Thyroid gland (tissue), 4 donors: ENCODE measurements at regions of chr6 and their contacts with region 1.

Region 1: DNA sequence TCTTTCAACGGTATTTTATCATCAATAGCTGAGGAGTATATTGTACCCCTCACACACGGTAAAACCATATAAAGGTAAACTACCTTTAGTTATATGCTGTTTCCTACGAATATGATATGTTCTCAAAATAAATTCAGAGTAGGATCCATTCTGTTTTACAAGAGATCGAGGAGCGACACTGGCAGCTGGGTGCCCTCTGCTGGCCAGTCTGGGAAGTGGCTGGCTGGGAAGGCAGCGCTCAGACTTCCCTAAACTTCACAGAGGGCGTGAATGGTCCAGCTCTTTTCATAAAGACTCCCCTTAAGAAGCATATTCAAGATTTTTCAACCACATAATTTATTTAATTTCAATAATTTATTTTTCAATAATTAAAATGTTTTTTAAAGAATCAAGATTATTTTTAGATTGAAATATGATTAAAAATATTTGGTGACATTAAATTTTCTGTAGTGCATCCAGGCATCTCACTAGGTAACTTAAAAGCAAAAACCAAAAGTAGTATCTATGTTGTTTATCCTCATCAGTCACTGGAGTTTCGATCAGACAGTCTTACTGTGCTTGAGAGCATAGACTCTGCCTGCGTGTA is 187.5 kb upstream of the PDE10A start:
- DNase-seq: peak; percentile 76 to 79
- H3K4me3 ChIP-seq: peak overlapping the region in 1 of 3 donors; percentile 35
- H3K27ac ChIP-seq: peak overlapping the region in 1 of 3 donors; percentile 32
- H3K4me1 ChIP-seq: peaks cover 0 to 6% of the 10 kb centered on the region in 2 donors
- H3K27me3 ChIP-seq: no peaks in the 10 kb centered on the region
- CTCF ChIP-seq: peak; percentile 88 to 99 (median 94)
- POLR2A ChIP-seq: no peak

Region 2: DNA sequence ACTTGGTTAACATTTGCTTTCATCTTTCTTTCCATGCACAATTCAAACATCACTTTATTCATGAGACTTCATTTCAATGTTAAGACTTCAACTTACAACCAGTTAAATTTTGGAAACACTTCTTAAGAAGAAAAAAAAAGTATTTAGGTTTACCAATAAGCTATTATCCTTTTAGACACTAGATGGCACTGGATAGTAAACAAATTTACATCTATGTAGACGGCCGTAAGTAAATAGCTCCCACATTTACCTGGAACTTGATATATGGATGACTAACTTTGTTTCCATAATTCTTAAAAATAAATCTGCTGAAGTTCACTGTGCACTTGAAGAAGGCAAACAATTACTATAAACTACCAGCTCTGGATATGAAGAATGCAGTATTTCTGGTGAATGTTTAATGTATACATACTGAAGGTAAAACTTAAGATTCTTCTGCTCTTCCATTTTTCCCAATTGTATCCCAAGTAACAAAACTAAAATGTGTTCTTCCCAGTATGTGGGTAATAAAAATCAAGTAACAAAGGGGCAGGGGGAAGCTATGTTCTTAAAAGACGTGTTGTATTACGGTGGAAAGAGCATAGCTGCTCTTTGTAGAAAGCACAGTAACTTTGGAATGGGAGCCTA is 410.5 kb before region 1 on chr6:
- intact Hi-C with region 1: loop called (anchors 5 kb)
- DNase-seq: no peak
- H3K4me3 ChIP-seq: no peak overlapping the region
- H3K27ac ChIP-seq: no peak overlapping the region
- H3K4me1 ChIP-seq: peaks cover 0 to 4% of the 10 kb centered on the region in 2 donors
- H3K27me3 ChIP-seq: no peaks in the 10 kb centered on the region
- CTCF ChIP-seq: peak; percentile 22 to 76 (median 46)
- POLR2A ChIP-seq: no peak

Region 3: DNA sequence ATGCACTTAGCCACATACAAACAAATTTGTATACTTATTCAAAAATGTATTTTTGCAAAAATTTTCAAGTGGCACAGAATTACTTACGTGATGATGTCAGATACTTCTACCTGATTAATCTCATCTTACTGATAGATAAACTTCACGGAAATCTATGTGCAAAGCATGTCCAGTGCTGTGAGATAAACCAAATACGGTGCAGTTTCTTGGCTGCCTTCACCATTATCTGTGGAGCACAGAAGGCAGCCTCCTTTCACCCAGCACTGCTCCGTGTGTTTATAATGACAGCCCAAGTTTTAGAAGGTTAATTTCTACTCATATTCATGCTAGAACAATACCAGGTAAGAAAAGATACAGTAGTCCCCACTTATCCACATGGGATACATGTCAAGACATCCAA is 128.5 kb before region 1 on chr6:
- intact Hi-C with region 1: no loop called
- DNase-seq: no peak
- H3K4me3 ChIP-seq: no peak overlapping the region
- H3K27ac ChIP-seq: no peak overlapping the region
- H3K4me1 ChIP-seq: no peaks in the 10 kb centered on the region
- H3K27me3 ChIP-seq: no peaks in the 10 kb centered on the region
- CTCF ChIP-seq: no peak
- POLR2A ChIP-seq: no peak

Region 4: DNA sequence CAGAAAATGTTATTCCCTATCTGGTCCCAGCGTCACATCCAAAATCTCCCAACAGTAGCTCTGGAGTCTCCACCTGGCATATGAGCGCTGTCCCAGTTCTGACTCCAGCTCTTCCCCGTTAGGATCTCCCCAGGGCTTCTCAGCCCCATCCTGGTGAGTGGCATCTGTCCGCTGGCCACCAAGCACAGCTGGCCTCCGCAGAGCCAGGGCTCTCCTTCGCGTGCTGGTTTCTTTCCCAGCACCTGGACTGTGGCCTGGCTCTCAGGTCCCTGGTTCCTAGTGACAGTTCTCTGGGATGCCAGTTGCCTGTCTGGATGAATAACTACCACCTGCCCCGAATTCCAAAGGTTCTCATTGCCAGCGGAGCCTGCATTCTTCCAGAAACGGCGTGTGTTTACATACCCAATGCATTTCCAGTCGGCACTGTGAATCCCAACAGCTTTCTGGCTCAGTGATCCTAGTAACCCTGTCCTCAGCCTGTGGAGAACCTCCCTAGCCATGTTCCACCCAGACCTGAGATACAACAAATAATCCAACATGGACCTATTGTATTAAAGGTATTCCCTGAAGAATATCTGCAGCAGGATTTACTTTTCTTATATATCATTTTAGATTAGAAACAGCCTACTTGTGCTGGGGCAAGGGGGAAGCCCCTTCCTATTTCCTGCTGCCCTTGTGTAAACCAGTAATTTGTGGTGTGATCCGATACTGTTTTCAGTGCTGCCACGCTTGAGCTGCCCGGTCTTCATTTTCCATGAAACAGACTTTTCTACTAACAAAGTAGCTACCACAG is 117.6 kb before region 1 on chr6:
- intact Hi-C with region 1: loop called (anchors 5 kb)
- DNase-seq: no peak
- H3K4me3 ChIP-seq: no peak overlapping the region
- H3K27ac ChIP-seq: no peak overlapping the region
- H3K4me1 ChIP-seq: peaks cover 0 to 3% of the 10 kb centered on the region in 2 donors
- H3K27me3 ChIP-seq: no peaks in the 10 kb centered on the region
- CTCF ChIP-seq: no peak
- POLR2A ChIP-seq: no peak

Region 5: GRCh38 chr6:165744555-165745228 is 105.8 kb before region 1 on chr6:
- intact Hi-C with region 1: no loop called
- DNase-seq: no peak
- H3K4me3 ChIP-seq: no peak overlapping the region
- H3K27ac ChIP-seq: no peak overlapping the region
- H3K4me1 ChIP-seq: peaks cover 5 to 7% of the 10 kb centered on the region in 2 donors
- H3K27me3 ChIP-seq: no peaks in the 10 kb centered on the region
- CTCF ChIP-seq: no peak
- POLR2A ChIP-seq: no peak

Region 6: GRCh38 chr6:165774903-165775601 is 75.5 kb before region 1 on chr6:
- intact Hi-C with region 1: no loop called
- DNase-seq: peak; percentile 12 to 16
- H3K4me3 ChIP-seq: no peak overlapping the region
- H3K27ac ChIP-seq: no peak overlapping the region
- H3K4me1 ChIP-seq: peaks cover 0 to 4% of the 10 kb centered on the region in 2 donors
- H3K27me3 ChIP-seq: no peaks in the 10 kb centered on the region
- CTCF ChIP-seq: no peak
- POLR2A ChIP-seq: no peak

Region 7: DNA sequence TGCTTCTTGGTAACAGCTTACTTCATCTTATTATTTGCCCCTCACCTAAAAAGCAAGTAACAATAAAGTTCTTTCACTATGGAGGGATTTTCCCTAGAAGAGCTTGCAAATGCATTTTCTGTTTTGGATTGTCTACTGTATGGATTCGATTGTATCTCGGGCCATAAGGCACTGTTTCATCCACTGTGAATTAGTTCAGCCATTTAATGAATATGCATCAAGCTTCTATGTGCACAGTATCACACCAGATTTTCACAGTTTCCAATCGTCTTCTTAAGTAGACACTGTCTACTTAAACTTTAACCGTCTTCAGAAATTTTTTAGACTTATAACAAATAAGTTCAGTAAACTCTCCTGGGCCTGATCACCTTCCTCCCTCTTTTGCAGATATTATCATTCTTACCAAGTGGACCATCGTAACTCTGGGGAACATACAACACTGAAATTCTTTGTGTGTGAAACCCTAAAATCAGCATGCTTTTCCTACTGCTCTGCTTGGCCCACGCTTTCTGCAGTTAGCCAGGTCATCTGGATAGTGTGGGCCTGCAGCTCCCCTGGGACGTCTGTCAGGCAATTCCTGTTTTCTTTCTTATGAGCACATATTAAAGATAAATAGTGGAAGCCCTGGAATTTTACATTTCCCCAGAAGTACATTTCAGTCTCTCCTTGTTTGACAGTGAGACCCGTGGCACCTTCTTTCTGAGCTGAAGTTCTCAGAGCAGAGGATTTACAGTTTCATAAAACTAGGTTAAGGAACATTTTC is 51.0 kb before region 1 on chr6:
- intact Hi-C with region 1: no loop called
- DNase-seq: no peak
- H3K4me3 ChIP-seq: no peak overlapping the region
- H3K27ac ChIP-seq: no peak overlapping the region
- H3K4me1 ChIP-seq: no peaks in the 10 kb centered on the region
- H3K27me3 ChIP-seq: no peaks in the 10 kb centered on the region
- CTCF ChIP-seq: no peak
- POLR2A ChIP-seq: no peak